ENCODE measurements at regions of chr21 and their contacts with region 1.

Region 1: DNA sequence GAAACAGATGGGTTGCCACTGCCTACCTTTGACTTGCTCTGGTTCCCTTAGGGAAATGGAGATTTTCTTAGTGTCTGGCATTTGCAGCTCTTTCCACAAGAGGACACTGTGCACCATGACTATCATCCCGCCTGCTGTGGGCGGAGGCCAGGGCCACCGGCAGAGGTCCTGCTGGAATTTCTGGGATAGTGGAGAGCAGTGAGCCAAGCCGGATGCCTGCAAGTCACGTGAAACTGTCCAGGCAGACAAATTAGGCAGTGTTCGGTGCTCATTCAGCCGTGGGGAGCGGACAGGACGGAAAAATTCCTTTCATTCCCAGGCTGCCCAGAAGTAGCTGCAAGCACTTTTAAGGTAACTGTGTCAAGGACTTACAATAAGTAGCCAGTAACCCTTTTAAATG is 43.4 kb downstream of the IGSF5 start:
- H3K4me3 ChIP-seq: no peak overlapping the region
- H3K27ac ChIP-seq: no peak overlapping the region
- H3K4me1 ChIP-seq: no peaks in the 10 kb centered on the region
- CTCF ChIP-seq: peak; percentile 97

Region 2: DNA sequence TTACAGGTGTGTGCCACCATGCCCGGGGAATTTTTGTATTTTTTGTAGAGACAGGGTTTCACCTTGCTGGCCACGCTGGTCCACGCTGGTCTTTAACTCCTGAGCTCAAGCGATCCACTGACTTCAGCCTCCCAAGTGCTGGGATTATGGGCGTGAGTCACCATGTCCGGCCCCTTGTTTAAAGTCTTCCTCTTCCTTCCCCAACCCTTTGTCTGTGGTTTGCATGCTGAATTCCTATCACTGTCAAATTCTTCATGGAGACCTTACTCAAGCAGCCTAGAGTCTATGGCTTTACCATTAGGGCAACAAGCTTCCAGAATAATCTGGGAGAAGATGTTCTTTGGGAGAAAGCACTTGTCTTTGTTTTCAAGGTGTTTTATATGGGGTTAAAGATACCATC is 140.9 kb before region 1 on chr21:
- CTCF ChIA-PET with region 1: no interaction called
- POLR2A ChIA-PET with region 1: no interaction called
- H3K4me3 ChIP-seq: no peak overlapping the region
- H3K27ac ChIP-seq: no peak overlapping the region
- H3K4me1 ChIP-seq: no peaks in the 10 kb centered on the region
- CTCF ChIP-seq: no peak

Region 3: DNA sequence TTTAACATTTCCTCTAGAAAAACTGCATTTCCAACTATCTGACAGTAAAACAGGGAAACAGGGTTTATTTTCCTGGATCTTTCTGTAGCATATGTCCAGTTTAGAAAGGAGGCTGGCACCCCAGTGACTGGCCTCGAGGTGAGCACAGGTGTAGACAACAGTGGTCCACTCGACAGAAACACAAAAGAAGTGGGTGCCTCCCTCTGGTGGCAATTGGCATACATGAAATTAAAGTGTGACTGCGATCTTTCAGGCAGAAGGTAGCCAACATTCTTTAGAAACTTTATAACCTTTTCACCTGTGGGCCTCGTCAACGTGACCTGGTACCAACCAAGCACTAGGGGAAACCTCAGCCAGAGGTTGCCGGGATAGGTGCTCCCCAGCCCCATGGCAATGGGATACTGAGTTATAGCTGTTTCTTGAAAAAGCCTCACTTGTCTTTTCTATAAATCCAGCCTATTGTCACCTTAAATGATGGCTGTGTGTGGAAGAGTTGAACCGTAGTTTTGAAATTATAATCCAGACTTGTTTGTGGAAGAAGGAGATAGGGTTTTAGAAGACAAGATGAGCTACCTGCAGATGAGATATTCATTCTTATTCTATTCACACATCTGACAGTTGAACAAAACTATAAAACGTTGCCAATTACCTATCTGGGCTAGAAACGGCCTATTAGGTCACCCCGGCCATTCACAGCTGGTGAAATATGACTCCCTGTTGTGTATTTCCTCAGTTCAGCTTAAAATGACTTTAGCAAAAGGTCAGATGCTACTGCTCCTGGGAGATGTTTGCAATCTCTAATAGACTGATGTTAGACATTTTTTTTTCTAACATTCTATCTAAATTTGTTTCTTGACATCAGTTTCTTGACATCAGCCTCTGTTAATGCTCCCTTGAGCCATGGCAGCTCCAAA is 123.2 kb after region 1 on chr21:
- CTCF ChIA-PET with region 1: interaction called, 14 read pairs
- POLR2A ChIA-PET with region 1: no interaction called
- H3K4me3 ChIP-seq: no peak overlapping the region
- H3K27ac ChIP-seq: no peak overlapping the region
- H3K4me1 ChIP-seq: no peaks in the 10 kb centered on the region
- CTCF ChIP-seq: no peak

Region 4: GRCh38 chr21:40043431-40043830 is 255.0 kb after region 1 on chr21:
- CTCF ChIA-PET with region 1: interaction called, 12 read pairs
- POLR2A ChIA-PET with region 1: no interaction called
- H3K4me3 ChIP-seq: no peak overlapping the region
- H3K27ac ChIP-seq: no peak overlapping the region
- H3K4me1 ChIP-seq: 0 out of 2 replicates have a peak, but pooled peaks cover 4% of the 10 kb centered on the region
- CTCF ChIP-seq: no peak